HCT116 (cell line): ENCODE measurements at regions of chr12 and their contacts with region 1.

Region 1: DNA sequence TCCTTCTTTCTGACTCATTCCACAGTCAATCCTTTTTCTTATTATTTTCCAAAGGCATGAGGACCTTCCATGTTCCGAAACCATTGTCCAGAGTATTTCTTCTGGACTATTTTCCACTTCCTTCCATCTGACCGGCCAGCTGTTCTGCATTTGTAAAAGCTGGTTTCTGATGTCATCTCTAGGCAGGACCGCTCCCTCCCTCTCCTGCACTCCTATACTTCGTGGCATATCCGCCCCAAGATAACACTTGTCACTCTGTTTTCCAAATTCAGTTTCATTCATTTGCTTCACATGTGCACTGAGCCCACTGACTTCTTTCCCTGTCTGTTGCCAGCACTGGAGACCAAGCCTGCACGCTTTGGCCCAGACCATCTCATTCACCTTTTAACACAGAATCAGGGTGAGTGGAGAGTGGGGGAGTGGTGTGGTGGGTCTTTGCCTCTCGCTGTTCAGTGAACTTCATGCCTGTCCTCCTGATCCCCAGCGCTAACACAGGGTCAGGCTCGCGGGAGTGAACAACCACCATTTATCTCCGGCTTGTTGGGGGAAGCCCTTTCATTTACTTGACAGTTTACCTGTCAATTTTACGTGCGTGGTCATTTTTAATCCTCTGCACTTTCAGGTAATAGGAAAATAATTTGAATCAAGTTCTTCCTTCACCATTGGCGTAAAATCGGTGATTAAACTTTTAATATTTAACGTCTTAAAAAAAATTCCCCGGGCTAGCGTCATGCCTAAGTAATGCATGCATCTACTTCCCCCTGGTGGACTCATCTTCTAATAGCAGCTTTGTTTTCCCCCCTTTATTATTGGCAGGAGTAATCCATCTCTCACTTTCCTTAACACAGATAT is 52.5 kb downstream of the C12orf75 start:
- DNase-seq: peak; percentile 41
- ATAC-seq: peak; percentile 83
- H3K4me3 ChIP-seq: no peak overlapping the region
- H3K27ac ChIP-seq: no peak overlapping the region
- H3K4me1 ChIP-seq: no peaks in the 10 kb centered on the region
- H3K27me3 ChIP-seq: no peaks in the 10 kb centered on the region
- CTCF ChIP-seq: peak; percentile 70 to 85 (median 80)
- POLR2A ChIP-seq: no peak
- RAD21 ChIP-seq: peak; percentile 94

Region 2: DNA sequence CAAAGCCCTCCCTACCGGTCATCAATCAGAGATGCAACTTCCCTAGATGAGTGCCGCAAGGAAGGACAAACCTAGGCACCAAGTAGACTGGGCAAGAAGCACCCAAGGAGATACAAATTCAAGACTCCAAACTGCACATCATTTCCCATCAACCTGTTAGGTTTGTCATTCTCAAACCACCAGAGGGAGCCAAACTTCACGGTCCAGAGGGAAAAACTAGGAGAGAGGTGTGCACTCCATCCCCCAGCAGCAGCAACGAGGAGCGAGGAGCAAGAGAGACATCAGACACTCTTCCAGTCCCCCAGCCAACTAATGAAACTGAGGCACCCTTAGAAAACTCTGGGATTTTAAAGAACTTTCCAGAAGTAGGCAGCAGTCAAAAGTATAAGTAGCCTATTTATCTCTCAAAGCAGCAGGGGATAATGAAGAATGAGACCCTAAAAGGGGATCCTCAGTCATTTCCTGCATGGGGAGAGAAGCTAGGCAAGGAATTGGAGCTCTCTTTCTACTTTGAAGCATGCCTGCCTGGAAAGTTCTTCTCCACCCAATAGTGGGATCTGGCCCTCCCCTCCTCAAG is 1505.0 kb before region 1 on chr12:
- CTCF ChIA-PET with region 1: no interaction called
- POLR2A ChIA-PET with region 1: no interaction called
- RAD21 ChIA-PET with region 1: no interaction called
- intact Hi-C with region 1: loop called (anchors 10 kb)
- DNase-seq: peak; percentile 64
- ATAC-seq: peak; percentile 99
- H3K4me3 ChIP-seq: no peak overlapping the region
- H3K27ac ChIP-seq: no peak overlapping the region
- H3K4me1 ChIP-seq: peaks cover 0 to 4% of the 10 kb centered on the region in 2 experiments; a peak in 1 of 4 replicates
- H3K27me3 ChIP-seq: no peaks in the 10 kb centered on the region
- CTCF ChIP-seq: peak; percentile 71 to 87 (median 79)
- POLR2A ChIP-seq: no peak
- RAD21 ChIP-seq: peak; percentile 92

Region 3: GRCh38 chr12:105279460-105280056 is 103.4 kb before region 1 on chr12:
- CTCF ChIA-PET with region 1: interaction called, 3 read pairs
- POLR2A ChIA-PET with region 1: no interaction called
- RAD21 ChIA-PET with region 1: no interaction called
- intact Hi-C with region 1: loop called (anchors 1 kb)
- DNase-seq: peak; percentile 26
- ATAC-seq: peak; percentile 89
- H3K4me3 ChIP-seq: no peak overlapping the region
- H3K27ac ChIP-seq: no peak overlapping the region
- H3K4me1 ChIP-seq: no peaks in the 10 kb centered on the region
- H3K27me3 ChIP-seq: no peaks in the 10 kb centered on the region
- CTCF ChIP-seq: peak; percentile 64 to 89 (median 73)
- POLR2A ChIP-seq: no peak
- RAD21 ChIP-seq: peak; percentile 67